Common myeloid progenitor, CD34-positive (primary cell): ENCODE measurements at regions of chr20 and their contacts with region 1.

Region 1: GRCh38 chr20:57383447-57384347 is 7.5 kb upstream of the RBM38 start:
- DNase-seq: no peak
- H3K4me3 ChIP-seq: no peak overlapping the region
- H3K27ac ChIP-seq: no peak overlapping the region
- H3K4me1 ChIP-seq: peaks cover 0 to under 1% (median 0%) of the 10 kb centered on the region in 4 experiments
- H3K27me3 ChIP-seq: no peaks in the 10 kb centered on the region

Region 2: GRCh38 chr20:57108732-57109573 is 274.7 kb before region 1 on chr20:
- CTCF ChIA-PET with region 1: no interaction called
- POLR2A ChIA-PET with region 1: no interaction called
- DNase-seq: no peak
- H3K4me3 ChIP-seq: no peak overlapping the region
- H3K27ac ChIP-seq: no peak overlapping the region
- H3K4me1 ChIP-seq: no peaks in the 10 kb centered on the region
- H3K27me3 ChIP-seq: peaks cover 0 to 29% (median 1%) of the 10 kb centered on the region in 5 experiments

Region 3: DNA sequence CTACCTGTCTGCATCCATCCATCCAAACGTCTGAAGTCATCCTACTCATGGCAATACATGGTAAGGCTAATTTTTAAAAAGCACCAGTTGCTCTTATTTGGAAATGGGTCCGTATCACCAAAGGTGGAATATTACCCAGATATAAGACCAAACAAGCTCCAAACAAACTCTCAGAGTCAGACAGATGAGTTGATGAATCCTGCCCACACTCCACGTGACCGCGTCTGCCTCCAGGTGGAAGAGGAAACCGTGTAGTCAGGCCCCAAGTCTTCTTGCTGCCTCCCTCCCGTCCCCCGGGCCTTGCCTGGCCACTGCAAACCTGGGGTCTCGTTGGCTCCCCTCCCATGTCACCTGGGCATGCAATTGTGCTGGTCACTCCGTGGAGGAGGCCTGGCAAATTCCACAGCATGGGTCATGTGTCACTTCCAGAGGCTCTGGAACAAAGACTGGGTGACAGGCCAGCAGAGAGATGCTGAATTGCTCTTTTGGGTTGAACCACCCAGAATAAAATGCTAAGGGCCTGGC is 109.5 kb after region 1 on chr20:
- CTCF ChIA-PET with region 1: interaction called, 40 read pairs
- POLR2A ChIA-PET with region 1: no interaction called
- DNase-seq: no peak
- H3K4me3 ChIP-seq: no peak overlapping the region
- H3K27ac ChIP-seq: no peak overlapping the region
- H3K4me1 ChIP-seq: peaks cover 0 to 7% (median 3%) of the 10 kb centered on the region in 4 experiments
- H3K27me3 ChIP-seq: peaks cover 0 to 4% (median 2%) of the 10 kb centered on the region in 5 experiments

Region 4: DNA sequence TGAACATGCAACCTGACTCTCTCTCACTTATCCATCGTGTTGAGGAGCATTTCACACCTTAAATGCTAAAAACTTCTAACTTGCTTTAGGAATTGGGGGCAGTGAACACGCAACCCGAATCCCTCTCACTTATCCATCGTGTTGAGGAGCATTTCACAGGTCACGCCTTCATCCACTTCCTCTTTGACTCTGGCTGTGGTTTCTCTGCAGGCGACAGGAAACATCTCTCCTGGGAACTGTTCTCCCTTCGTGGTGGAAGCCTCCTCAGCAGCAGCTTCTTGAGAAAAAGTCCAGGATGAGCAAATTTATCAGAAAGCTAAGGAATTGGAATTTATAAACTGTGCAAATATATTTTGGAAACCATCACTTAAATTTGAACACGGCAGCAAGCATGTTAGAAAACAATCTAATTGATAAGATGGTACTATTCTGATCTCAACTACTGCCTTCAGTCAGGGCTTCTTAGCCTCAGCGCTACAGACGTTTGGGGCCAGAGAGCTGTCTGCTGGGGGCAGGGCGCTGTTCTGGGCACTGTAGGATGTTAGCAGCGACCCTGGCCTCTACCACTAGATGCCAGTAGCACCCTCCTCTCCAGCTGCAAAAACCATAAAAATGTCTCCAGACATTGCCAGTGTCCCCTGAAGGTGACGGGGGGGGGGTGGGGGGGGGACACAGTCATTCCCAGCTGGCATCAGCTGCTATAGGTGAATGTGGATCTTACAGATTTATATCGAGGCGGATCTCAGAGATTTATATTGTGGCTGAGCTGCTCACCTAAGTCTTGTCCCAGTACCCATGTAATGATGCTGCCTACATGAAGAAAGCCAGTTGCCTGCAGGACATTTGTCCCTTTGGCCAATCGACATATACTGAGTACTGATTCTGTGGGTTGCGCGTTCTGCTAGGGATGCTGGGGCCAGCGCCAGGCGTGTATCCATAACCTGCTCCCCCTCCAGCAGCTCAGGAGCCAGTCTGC is 115.0 kb after region 1 on chr20:
- CTCF ChIA-PET with region 1: interaction called, 40 read pairs
- POLR2A ChIA-PET with region 1: no interaction called
- DNase-seq: peak; percentile 49 to 73 (median 64)
- H3K4me3 ChIP-seq: peak overlapping the region in 2 of 7 experiments; percentile 39 to 56
- H3K27ac ChIP-seq: no peak overlapping the region
- H3K4me1 ChIP-seq: peaks cover 11 to 23% (median 14%) of the 10 kb centered on the region in 4 experiments
- H3K27me3 ChIP-seq: peaks cover 9 to 28% (median 15%) of the 10 kb centered on the region in 5 experiments

Region 5: DNA sequence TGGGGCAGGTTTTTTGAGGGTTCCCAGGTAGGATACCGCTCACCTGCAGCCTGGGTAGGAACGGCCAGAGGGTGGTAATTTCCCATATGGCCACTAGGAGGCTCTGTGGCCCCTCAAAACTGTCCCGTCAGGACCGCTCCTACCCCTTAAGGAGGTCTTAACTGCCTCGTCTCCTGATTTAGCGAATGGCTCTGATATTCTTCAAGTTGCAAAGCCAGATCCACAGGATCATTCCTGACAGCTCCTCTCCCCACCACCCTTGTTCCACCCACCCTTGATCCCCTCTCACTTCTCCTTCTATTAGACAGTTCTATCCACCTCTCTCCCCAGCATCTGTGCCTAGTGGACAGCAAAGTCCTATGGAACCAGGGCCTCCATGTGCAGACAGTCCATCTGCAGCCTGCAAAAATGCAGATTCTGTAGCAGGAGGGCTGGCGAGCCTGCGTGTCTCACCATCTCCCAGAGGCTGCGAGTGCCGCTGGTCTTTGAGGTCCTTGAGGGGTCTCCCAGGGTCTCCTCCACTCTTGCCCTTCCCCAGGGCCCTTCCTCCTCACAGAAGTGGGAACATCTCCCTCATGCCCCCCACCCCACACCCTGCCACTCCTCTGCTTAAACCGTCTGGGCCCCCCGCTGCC is 270.8 kb after region 1 on chr20:
- CTCF ChIA-PET with region 1: no interaction called
- POLR2A ChIA-PET with region 1: no interaction called
- DNase-seq: peak; percentile 60 to 74 (median 69)
- H3K4me3 ChIP-seq: no peak overlapping the region
- H3K27ac ChIP-seq: no peak overlapping the region
- H3K4me1 ChIP-seq: no peaks in the 10 kb centered on the region
- H3K27me3 ChIP-seq: peaks cover 0 to 4% (median 0%) of the 10 kb centered on the region in 5 experiments